GM10248 (cell line): ENCODE measurements at regions of chr15 and their contacts with region 1.

Region 1: GRCh38 chr15:65077981-65078352 is 1.4 kb downstream of the KBTBD13 start:
- DNase-seq: peak; percentile 70
- CTCF ChIP-seq: peak; percentile 48

Region 2: DNA sequence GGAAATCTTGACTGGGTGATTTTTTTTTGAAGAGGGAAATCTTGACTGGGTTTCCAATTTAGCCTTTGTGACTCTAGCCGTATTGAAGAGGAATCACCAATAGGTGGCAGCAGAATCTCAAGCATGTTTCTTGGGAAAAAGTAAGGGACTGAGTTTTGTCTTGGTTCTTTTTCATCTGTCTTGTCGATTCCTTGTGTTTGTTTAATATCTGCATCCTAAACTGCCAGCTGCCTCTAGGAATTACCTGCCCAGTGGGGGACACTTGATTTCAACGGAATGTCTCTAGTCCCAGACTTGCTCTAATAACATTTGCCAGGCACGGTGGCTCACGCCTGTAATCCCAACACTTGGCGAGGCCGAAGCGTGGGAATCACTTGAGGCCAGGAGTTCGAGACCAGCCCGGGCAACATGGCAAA is 391.7 kb before region 1 on chr15:
- CTCF ChIA-PET with region 1: no interaction called
- POLR2A ChIA-PET with region 1: no interaction called
- DNase-seq: peak; percentile 50
- CTCF ChIP-seq: peak; percentile 59

Region 3: GRCh38 chr15:65032801-65033537 is 45.0 kb before region 1 on chr15:
- CTCF ChIA-PET with region 1: interaction called, 18 read pairs
- POLR2A ChIA-PET with region 1: no interaction called
- DNase-seq: no peak
- CTCF ChIP-seq: peak; percentile 50

Region 4: GRCh38 chr15:65060641-65061397 is 17.1 kb before region 1 on chr15:
- CTCF ChIA-PET with region 1: interaction called, 72 read pairs
- POLR2A ChIA-PET with region 1: no interaction called
- DNase-seq: no peak
- CTCF ChIP-seq: no peak